Dendritic cell treated with granulocyte-macrophage colony-stimulating factor and Interleukin-4, amounts not matched to agents 40 ng/mL and 50 ng/mL, for 4 days (primary cell): ENCODE measurements at regions of chr10 and their contacts with region 1.

Region 1: GRCh38 chr10:75375838-75376237 is 25.7 kb downstream of the ZNF503 start:
- H3K4me3 Mint-ChIP-seq: no peak overlapping the region
- H3K27ac Mint-ChIP-seq: peak overlapping the region; percentile 80
- H3K4me1 Mint-ChIP-seq: peaks cover 60% of the 10 kb centered on the region
- H3K27me3 Mint-ChIP-seq: peaks cover 8% of the 10 kb centered on the region

Region 2: GRCh38 chr10:75191821-75192568 is 183.8 kb before region 1 on chr10:
- intact Hi-C with region 1: no loop called
- H3K4me3 Mint-ChIP-seq: no peak overlapping the region
- H3K27ac Mint-ChIP-seq: peak overlapping the region; percentile 63
- H3K4me1 Mint-ChIP-seq: peaks cover 15% of the 10 kb centered on the region
- H3K27me3 Mint-ChIP-seq: no peaks in the 10 kb centered on the region

Region 3: DNA sequence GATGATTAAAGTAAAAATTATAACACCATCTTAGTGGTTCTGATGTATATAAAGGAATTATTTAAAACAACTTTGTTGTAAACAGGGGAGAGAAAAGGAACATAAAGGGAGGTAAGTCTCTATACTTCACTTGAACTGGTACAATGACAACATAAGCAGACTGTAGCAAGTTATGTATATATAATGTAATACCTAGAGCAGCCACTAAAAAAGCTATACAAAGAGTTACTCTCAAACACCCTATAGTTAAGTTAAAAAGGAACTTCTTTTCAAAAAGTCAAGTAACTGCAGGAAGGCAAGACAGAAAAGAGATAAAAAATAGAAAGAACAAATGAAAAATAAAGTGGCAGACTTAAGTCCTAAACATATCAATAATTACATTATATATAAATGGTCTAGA is 56.6 kb before region 1 on chr10:
- intact Hi-C with region 1: loop called (anchors 2 kb)
- H3K4me3 Mint-ChIP-seq: no peak overlapping the region
- H3K27ac Mint-ChIP-seq: no peak overlapping the region
- H3K4me1 Mint-ChIP-seq: no peaks in the 10 kb centered on the region
- H3K27me3 Mint-ChIP-seq: peaks cover 5% of the 10 kb centered on the region

Region 4: GRCh38 chr10:75358835-75359431 is 16.9 kb before region 1 on chr10:
- intact Hi-C with region 1: loop called (anchors 2 kb)
- H3K4me3 Mint-ChIP-seq: no peak overlapping the region
- H3K27ac Mint-ChIP-seq: peak overlapping the region; percentile 72
- H3K4me1 Mint-ChIP-seq: peaks cover 33% of the 10 kb centered on the region
- H3K27me3 Mint-ChIP-seq: peaks cover 3% of the 10 kb centered on the region